Activated CD4-positive, alpha-beta memory T cell treated with anti-CD3 and anti-CD28 coated beads, Interleukin-2, amount 10 ng/mL, durations not matched to agents 7 days and 5 days (primary cell): ENCODE measurements at regions of chr3 and their contacts with region 1.

Region 1: DNA sequence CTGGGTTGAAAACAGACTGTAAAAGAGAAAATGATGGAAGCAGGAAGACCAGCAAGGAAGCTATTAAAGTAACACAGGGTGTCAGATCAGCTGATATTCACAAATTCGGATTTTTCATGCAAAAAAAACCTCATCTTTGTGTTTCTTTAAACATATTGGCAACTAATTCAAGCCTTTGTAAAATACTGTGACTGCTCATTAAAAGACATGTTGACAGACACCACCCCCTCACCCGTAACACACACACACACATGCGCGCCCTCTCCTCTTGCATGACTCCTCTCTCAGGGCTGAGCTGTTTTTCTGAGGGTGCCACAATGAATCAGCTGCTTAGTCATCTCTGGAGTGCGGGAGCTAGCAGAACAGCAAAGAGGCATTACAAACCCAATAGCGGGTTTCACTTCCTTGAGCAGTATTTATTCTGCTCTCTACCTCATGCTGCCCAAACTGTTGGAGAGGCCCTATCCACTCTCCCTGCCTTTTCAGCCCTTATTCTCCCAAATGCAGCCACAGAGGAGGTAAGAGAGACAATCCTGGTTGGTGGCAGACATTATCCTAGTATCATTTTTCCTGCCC is 35.8 kb upstream of the CCDC80 start:
- DNase-seq: peak; percentile 93
- H3K4me3 Mint-ChIP-seq: peak overlapping the region; percentile 38
- H3K27ac Mint-ChIP-seq: peak overlapping the region; percentile 94
- H3K4me1 Mint-ChIP-seq: peaks cover 72% of the 10 kb centered on the region
- H3K27me3 Mint-ChIP-seq: no peaks in the 10 kb centered on the region

Region 2: GRCh38 chr3:112002096-112002971 is 674.4 kb before region 1 on chr3:
- CTCF ChIA-PET with region 1: no interaction called
- POLR2A ChIA-PET with region 1: no interaction called
- DNase-seq: no peak
- H3K4me3 Mint-ChIP-seq: no peak overlapping the region
- H3K27ac Mint-ChIP-seq: peak overlapping the region; percentile 27
- H3K4me1 Mint-ChIP-seq: peaks cover 29% of the 10 kb centered on the region
- H3K27me3 Mint-ChIP-seq: no peaks in the 10 kb centered on the region

Region 3: GRCh38 chr3:112688819-112689218 is 12.1 kb after region 1 on chr3:
- CTCF ChIA-PET with region 1: no interaction called
- POLR2A ChIA-PET with region 1: interaction called, 12 read pairs
- DNase-seq: no peak
- H3K4me3 Mint-ChIP-seq: no peak overlapping the region
- H3K27ac Mint-ChIP-seq: no peak overlapping the region
- H3K4me1 Mint-ChIP-seq: peaks cover 23% of the 10 kb centered on the region
- H3K27me3 Mint-ChIP-seq: peaks cover 15% of the 10 kb centered on the region

Region 4: DNA sequence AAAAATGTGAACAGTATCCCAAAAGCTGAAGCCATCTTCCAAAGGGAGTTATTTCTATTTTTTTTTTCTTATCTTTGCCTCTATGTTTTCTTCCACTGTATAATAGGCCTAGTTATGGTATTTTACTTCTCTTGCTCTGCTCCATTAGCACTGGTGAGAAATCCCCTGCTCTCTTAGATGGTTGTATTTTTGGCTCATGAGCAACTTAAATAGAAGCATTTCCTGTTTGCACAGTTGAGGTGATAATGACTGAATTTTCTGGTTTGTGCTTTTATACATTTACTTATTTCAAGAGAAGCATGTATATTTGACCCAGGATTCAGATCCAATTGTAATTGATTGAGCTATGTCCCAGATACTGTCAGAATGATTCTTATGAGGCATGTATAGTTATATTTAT is 231.5 kb after region 1 on chr3:
- CTCF ChIA-PET with region 1: no interaction called
- POLR2A ChIA-PET with region 1: no interaction called
- DNase-seq: no peak
- H3K4me3 Mint-ChIP-seq: no peak overlapping the region
- H3K27ac Mint-ChIP-seq: no peak overlapping the region
- H3K4me1 Mint-ChIP-seq: peaks cover 3% of the 10 kb centered on the region
- H3K27me3 Mint-ChIP-seq: no peaks in the 10 kb centered on the region